ENCODE measurements at regions of chr2 and their contacts with region 1.

Region 1: DNA sequence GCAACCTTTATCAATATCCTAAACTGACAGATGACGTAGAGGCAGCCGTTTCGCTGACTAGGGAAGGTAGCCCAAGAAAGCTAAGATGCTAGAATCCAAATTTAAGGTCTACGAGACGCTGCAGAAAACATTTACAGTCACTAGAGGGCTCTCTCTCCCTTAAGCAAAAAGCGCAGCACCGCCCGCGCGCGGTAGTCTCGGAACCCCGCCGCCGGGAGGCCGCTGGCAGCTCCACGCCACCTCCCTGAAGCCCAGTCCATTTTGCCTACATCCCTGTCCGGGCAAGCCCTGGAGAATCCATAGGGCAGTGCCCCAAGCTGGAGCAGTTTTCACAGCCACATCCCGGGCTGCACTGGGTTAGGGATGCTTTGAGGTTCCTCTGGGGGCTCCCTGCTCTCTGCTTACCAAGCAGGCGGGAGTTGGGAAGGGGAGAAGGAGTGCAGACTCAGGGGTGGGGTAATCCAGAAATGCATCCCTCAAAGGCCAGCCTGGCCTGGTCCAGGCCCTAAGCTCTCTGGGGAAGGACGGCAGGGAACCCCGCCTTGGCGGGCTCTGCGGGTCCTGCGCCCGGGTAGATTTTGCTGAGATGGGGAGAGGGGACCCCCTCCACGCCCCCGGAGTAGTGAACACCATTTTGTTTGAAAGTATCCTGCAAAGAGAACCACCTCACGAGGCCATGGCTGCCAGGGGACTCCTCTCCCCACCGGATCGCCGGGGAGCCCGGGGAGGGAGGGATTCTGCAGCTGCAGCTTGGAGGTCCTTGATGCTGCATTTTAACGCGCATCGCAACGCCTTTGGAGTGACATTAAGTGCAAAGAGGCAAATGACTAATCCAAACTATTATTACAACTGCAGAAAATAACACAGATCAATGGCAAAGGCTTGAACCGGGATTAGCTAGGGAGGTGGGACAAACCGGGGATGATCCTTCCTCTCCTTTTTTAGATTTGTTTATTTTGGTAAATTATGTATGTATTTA is 1.3 kb upstream of the DPYSL5 start:
- DNase-seq: peak in 2 of 3 donors; percentile 62 to 71
- ATAC-seq: peak; percentile 81
- H3K4me3 ChIP-seq: no peak overlapping the region
- H3K4me1 ChIP-seq: peaks cover 23% of the 10 kb centered on the region
- CTCF ChIP-seq: peak; percentile 49

Region 2: GRCh38 chr2:26942543-26943295 is 96.1 kb after region 1 on chr2:
- intact Hi-C with region 1: loop called (anchors 5 kb)
- DNase-seq: peak in 2 of 3 donors; percentile 64 to 80
- ATAC-seq: peak; percentile 72
- H3K4me3 ChIP-seq: no peak overlapping the region
- H3K4me1 ChIP-seq: no peaks in the 10 kb centered on the region
- CTCF ChIP-seq: peak; percentile 51

Measured in mucosa of descending colon (tissue), 3 donors.